ENCODE measurements at regions of chr2 and their contacts with region 1.

Region 1: DNA sequence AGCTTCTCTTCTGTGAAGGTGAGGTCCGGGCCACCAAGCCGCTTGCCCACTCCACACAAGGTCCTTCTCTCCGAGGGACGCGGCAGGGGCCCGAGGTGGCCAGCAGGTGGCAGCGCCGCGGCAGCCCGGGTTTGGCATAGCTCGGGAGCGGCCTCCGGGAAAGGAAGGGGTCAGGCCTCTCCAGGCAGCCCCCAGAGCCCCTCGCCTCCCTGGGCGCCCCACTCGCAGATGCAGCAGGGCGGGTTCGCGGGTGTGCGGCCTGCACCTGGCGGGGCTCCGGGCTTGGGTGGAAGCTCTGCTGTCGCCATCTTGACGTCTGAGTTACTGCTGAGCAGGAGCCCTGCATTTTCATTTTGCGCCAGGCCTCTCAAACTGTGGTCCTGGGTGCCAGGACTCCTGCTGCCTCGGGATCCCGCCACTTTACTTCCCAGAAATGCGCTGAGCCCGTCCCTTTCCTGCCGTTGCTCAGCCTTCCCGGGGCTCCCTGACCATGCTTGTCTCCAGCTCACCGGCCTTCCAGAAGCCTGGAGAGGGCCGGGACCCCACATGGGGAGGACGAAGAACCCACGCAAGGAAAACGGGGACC is 18.6 kb upstream of the NCL start:
- DNase-seq: peak; percentile 36 to 92
- H3K4me3 ChIP-seq: peak overlapping the region; percentile 44
- CTCF ChIP-seq: peak in 1 of 3 donors; percentile 75
- POLR2A ChIP-seq: no peak

Region 2: DNA sequence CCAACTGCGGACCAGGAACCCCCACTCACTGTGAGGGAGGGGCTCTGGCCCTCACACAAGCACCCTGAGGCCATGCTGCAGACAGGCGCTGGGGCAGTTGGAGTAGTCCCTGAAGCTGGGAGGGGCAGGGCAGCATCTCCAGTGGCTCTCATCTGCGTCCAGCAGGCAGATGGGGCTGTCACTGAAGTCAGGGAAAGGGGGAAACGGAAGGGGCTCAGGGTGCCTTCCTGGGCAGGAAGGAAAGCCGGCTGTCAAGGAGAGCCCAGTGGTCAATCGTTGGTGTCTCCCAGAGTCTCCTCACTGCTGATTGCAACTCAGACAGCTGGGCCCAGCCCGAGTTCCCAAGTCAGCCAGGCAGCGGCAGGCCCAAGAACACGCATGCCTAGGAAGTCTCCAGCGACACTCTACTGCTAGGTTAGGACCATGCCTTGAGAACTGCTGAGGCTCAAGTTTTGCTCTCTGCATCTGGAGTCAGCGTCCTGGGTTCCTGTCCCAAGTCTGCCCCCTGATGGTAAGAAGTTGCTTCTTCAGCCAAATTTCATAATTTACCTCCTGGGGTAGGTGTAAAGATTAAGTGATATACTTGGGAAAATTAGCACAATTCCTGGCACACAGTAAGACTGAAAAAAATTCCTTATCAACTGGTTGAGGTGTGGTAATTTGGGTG is 74.8 kb after region 1 on chr2:
- intact Hi-C with region 1: loop called (anchors 10 kb)
- DNase-seq: peak in 1 of 2 donors; percentile 80
- H3K4me3 ChIP-seq: no peak overlapping the region
- CTCF ChIP-seq: peak in 1 of 3 donors; percentile 61
- POLR2A ChIP-seq: no peak

Measured in lower leg skin (tissue), 4 donors.